ENCODE measurements at regions of chr7 and their contacts with region 1.

Region 1: DNA sequence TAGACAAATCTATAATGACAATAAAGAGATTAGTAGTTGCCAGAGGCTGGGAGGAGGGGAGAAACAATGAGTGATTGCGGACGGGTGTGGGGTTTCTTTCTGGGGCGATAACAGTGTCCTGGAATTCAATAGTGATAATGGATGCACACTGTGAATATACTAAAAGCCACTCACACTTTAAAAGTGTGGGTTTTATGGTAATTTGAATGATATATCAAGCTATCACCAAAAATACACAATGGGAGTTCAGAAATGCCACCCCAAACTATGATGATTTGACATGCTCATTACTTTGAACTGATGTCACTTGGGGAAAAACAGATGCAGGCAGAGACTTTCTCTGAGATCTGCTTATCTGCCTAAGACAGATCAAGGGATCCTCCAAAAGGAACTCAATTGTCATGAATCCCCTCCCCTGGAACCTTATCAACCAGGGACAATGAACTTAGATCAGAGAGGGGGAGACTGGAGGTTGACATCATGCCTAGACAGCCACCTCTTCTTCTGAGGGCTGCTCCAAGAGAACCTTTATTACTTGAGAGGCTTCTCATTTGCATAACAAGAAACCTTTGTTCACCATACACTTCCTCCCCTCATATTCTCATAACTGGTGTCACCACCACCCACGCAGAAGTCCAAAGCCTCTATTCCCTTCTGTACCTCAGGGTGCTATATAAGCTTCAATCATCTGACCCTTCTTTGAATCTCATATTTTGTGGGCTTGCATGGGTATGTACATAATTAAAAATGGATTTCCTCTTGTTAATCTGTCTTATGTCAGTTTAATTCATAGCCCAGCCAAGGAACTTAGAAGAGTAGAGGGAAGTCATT is 14.8 kb upstream of the ZC3HAV1 start:
- DNase-seq: peak; percentile 92 to 98 (median 96)
- ATAC-seq: peak; percentile 88
- H3K4me3 ChIP-seq: no peak overlapping the region
- H3K27ac ChIP-seq: peak overlapping the region; percentile 49; the same call in 2 of the 3 replicates
- H3K4me1 ChIP-seq: peaks cover 9 to 25% of the 10 kb centered on the region in 2 experiments; a peak in 4 of 5 replicates
- H3K27me3 ChIP-seq: no peaks in the 10 kb centered on the region
- CTCF ChIP-seq: no peak
- EP300 ChIP-seq: peak; percentile 98
- POLR2A ChIP-seq: no peak
- RAD21 ChIP-seq: peak in 1 of 2 experiments; percentile 31; a peak in 1 of 4 replicates

Region 2: GRCh38 chr7:138886501-138886917 is 237.8 kb before region 1 on chr7:
- CTCF ChIA-PET with region 1: interaction called, 5 read pairs
- POLR2A ChIA-PET with region 1: no interaction called
- in situ Hi-C with region 1: no loop called
- intact Hi-C with region 1: loop called (anchors 1 kb)
- DNase-seq: peak; percentile 64 to 74 (median 68)
- ATAC-seq: peak; percentile 82
- H3K4me3 ChIP-seq: no peak overlapping the region
- H3K27ac ChIP-seq: no peak overlapping the region
- H3K4me1 ChIP-seq: no peaks in the 10 kb centered on the region
- H3K27me3 ChIP-seq: peaks cover 52 to 61% of the 10 kb centered on the region in 2 experiments
- CTCF ChIP-seq: peak; percentile 63 to 93 (median 80); a peak in 5 of 6 replicates
- EP300 ChIP-seq: no peak
- POLR2A ChIP-seq: no peak
- RAD21 ChIP-seq: peak; percentile 69 to 82

Region 3: GRCh38 chr7:139016931-139017511 is 107.3 kb before region 1 on chr7:
- CTCF ChIA-PET with region 1: interaction called, 13 read pairs
- POLR2A ChIA-PET with region 1: no interaction called
- in situ Hi-C with region 1: no loop called
- intact Hi-C with region 1: loop called (anchors 1 kb)
- DNase-seq: peak; percentile 81 to 87 (median 84)
- ATAC-seq: peak; percentile 97
- H3K4me3 ChIP-seq: no peak overlapping the region
- H3K27ac ChIP-seq: no peak overlapping the region
- H3K4me1 ChIP-seq: no peaks in the 10 kb centered on the region
- H3K27me3 ChIP-seq: peaks cover 25 to 27% of the 10 kb centered on the region in 2 experiments
- CTCF ChIP-seq: peak; percentile 88 to 97 (median 91)
- EP300 ChIP-seq: no peak
- POLR2A ChIP-seq: no peak
- RAD21 ChIP-seq: peak; percentile 93 to 98

Region 4: DNA sequence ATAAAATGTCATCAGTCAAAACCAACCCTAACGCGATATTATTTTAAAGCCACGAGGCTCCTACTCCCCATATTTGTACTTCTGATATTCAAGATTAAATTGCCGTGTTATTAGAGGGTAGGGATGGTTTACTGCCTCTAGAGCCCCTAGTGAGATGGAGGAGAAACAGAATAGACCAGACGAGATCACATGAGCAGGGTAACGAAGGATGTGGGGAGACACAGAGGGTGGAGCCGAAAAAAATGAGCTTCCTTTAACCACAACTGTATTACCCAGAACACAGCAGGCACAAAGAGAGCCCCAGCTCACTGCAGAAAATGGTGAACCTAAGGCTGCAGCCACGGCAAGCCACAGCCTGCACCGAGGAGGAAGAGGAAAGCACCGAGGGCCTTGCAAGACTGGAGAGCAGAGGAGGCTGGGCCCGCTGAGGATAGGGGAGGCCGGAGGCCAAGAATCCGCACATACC is 29.1 kb before region 1 on chr7:
- CTCF ChIA-PET with region 1: no interaction called
- POLR2A ChIA-PET with region 1: interaction called, 3 read pairs
- in situ Hi-C with region 1: no loop called
- intact Hi-C with region 1: loop called (anchors 5 kb)
- DNase-seq: peak in 3 of 4 experiments; percentile 16 to 74 (median 64)
- ATAC-seq: peak; percentile 53
- H3K4me3 ChIP-seq: no peak overlapping the region
- H3K27ac ChIP-seq: peak overlapping the region; percentile 30; the same call in 2 of the 3 replicates
- H3K4me1 ChIP-seq: peaks cover 30 to 41% of the 10 kb centered on the region in 2 experiments
- H3K27me3 ChIP-seq: no peaks in the 10 kb centered on the region
- CTCF ChIP-seq: peak in 1 of 3 experiments; percentile 13; a peak in 1 of 6 replicates
- EP300 ChIP-seq: peak; percentile 12; the same call in 1 of the 2 replicates
- POLR2A ChIP-seq: no peak
- RAD21 ChIP-seq: peak in 1 of 2 experiments; percentile 7; a peak in 1 of 4 replicates

Region 5: DNA sequence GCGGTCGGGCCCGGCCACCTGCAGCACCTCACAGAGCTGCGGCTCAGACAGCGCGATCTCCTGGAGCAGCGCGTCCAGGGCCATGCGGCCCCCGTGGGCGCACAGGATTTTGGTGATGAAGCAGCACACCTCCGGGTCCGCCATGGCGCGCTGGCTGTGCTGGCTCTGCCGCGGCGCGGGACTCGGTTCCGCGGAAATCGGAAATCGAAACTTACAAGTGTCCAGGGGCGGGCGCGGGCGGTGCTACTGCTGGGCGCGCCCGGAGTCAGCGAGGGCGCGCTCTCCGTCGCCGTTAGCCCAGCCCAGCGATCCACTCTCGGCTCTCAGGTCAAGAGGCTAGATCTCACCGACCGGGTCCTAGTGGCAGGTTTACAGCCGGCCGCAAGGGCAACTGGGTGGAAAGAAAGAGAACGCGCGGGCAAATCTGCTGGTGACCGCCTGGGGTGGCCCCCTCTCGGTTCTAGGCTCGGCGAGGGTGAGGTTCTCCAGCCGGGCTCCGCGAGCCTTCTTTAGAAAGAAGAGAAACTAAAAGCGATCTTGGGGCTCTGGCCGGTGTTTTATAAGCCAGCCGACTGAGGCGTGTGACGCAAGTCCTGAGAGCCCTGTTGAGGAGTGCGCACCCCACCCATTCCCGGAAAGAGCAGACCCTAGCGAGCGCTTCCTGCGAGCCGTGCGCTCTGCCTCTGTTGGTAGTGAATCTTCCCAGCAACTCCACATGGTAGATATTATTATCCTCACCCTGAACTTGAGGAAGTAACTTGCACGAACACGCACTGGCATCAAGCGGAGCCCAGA is 14.9 kb before region 1 on chr7 and contains the start of gene ZC3HAV1:
- CTCF ChIA-PET with region 1: interaction called, 3 read pairs
- POLR2A ChIA-PET with region 1: interaction called, 8 read pairs
- in situ Hi-C with region 1: no loop called
- intact Hi-C with region 1: loop called (anchors 2 kb)
- DNase-seq: peak; percentile 85 to 94 (median 90)
- ATAC-seq: peak; percentile 91
- H3K4me3 ChIP-seq: peak within 1 kb of the TSS; percentile 87
- H3K27ac ChIP-seq: peak within 1 kb of the TSS; percentile 88
- H3K4me1 ChIP-seq: peaks cover 19 to 44% of the 10 kb centered on the region in 2 experiments
- H3K27me3 ChIP-seq: no peaks in the 10 kb centered on the region
- CTCF ChIP-seq: peak in 1 of 3 experiments; percentile 38; a peak in 5 of 6 replicates
- EP300 ChIP-seq: no peak
- POLR2A ChIP-seq: peak; percentile 93
- RAD21 ChIP-seq: peak in 1 of 2 experiments; percentile 18; a peak in 3 of 4 replicates
- polyA plus RNA-seq, gene ZC3HAV1: 11.9 to 13.4 TPM

Region 6: DNA sequence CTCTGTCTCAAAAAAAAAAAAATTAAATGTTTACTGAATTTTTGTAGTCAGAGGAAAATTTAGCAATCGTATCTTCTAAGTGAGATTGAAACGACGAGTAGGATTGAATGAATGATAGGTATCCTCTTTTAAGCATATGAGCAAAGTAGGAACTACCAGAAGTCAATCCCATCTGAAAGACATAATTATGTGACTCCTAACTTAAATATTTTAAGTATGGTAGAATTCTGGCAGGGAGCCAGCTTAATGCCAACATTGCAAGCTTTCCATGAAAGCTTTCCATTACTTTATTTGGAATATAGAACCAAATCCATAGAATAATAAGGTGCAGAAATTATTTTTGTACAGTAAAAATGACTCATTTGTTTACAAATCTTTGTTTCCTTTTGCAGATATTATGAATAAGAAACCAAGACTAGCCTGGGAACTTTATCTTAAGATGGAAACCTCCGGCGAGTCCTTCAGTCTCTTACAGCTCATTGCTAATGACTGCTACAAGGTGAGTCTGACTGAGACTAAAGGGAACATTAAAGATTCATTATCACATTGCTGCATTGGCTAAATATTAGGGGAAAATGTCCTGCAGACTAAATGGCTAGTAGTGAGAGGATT is 56.5 kb after region 1 on chr7:
- CTCF ChIA-PET with region 1: no interaction called
- POLR2A ChIA-PET with region 1: no interaction called
- in situ Hi-C with region 1: no loop called
- intact Hi-C with region 1: no loop called
- DNase-seq: no peak
- ATAC-seq: no peak
- H3K4me3 ChIP-seq: no peak overlapping the region
- H3K27ac ChIP-seq: no peak overlapping the region
- H3K4me1 ChIP-seq: peaks cover 7 to 35% of the 10 kb centered on the region in 2 experiments; a peak in 4 of 5 replicates
- H3K27me3 ChIP-seq: no peaks in the 10 kb centered on the region
- CTCF ChIP-seq: no peak
- EP300 ChIP-seq: no peak
- POLR2A ChIP-seq: no peak
- RAD21 ChIP-seq: no peak

Measured in K562 (cell line).